Posterior cingulate gyrus (tissue), 11 donors: ENCODE measurements at regions of chr12 and their contacts with region 1.

Region 1: GRCh38 chr12:9331218-9331626 is 123.0 kb upstream of the PZP start:
- DNase-seq: peak; percentile 59 to 96 (median 81)

Region 2: GRCh38 chr12:9464408-9464807 is 133.2 kb after region 1 on chr12:
- intact Hi-C with region 1: loop called (anchors 1 kb)
- DNase-seq: no peak

Region 3: DNA sequence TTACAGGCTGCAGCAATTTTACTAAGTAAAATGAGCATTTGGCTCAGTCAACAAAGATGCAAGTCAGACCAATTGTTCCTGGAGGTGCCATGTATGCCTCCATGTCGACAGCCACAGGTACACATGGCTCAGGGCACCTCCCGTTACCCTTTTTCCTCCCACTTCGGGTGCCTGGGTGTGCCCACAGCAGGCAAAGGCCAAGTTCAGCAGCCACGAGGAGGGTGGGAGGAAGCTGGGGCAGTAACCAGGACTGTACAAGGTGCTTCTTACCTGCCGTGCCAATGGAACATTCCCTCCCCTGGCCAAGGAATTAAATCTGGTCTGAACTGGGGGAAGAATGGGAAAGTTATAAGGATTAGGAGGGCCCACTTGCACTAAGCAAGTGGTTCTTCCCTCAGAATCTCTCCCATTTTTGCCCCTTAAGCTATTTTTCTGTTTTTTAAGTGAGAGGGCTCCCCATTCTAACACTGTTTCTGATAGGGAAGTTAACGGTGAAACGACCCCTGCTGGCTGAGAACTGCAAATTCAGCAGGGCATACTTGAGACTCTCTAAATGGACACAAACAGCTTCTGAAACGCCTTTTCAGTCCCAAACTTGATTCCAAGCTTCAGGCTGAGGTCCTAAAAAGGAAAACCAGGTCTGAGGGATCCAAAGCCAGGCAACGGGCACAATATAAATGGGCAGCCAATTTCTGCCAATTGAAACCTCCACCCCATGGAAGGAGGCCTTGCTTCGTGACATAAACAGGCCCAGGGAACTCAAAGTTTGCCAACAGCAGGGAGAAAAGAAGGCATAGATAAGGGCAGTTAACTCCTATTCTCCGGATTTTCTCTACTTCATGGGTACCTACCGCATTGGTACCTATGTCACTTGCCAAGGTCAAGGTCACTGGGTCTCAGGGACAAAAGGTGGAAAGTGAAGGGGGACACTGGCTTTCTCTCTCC is 376.9 kb after region 1 on chr12:
- intact Hi-C with region 1: loop called (anchors 5 kb)
- DNase-seq: peak in 5 of 10 donors; percentile 22 to 78 (median 40)